ENCODE measurements at regions of chr14 and their contacts with region 1.

Region 1: DNA sequence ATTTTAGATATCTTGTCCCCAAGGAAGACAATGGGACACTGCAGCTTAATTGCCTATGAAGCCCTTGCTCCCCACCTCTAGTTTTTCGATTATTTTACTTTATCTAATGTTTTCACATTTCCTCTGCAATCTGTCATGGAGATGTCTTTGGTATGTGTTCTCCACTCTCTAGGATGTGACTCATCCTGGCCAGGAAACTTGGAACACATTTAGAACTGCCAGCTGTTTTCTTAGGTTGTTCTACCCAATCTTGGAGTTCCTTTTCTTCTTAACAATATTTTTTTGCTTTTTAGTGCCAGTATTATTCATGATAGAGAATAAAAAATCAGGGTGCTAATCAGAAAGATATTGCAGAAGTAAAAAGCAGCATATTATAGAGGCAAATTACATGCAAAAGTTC is 101.7 kb upstream of the CLEC14A start:
- DNase-seq: no peak

Region 2: GRCh38 chr14:37924622-37925021 is 432.9 kb before region 1 on chr14:
- intact Hi-C with region 1: no loop called
- DNase-seq: no peak

Region 3: GRCh38 chr14:38098074-38098836 is 259.3 kb before region 1 on chr14:
- intact Hi-C with region 1: no loop called
- DNase-seq: no peak

Region 4: DNA sequence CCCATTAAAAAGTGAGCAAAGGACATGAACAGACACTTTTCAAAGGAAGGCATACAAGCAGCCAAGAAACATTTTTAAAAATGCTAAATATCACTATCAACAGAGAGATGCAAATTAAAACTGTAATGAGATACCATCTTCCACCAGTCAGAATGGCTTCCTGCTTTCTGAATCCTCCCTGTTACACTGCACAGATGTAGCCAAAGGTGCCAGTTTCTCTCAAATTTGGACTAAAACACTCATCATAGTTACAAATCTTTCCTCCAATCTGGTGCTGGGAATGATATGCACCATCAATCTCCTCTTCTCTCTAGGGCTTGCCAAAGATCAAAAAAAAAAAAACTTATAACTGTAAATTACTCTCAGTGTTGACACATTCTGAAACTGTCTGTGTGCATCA is 210.1 kb after region 1 on chr14:
- intact Hi-C with region 1: loop called (anchors 10 kb)
- DNase-seq: no peak

Measured in posterior cingulate gyrus (tissue), 11 donors.